CD4-positive, alpha-beta T cell (primary cell): ENCODE measurements at regions of chr17 and their contacts with region 1.

Region 1: DNA sequence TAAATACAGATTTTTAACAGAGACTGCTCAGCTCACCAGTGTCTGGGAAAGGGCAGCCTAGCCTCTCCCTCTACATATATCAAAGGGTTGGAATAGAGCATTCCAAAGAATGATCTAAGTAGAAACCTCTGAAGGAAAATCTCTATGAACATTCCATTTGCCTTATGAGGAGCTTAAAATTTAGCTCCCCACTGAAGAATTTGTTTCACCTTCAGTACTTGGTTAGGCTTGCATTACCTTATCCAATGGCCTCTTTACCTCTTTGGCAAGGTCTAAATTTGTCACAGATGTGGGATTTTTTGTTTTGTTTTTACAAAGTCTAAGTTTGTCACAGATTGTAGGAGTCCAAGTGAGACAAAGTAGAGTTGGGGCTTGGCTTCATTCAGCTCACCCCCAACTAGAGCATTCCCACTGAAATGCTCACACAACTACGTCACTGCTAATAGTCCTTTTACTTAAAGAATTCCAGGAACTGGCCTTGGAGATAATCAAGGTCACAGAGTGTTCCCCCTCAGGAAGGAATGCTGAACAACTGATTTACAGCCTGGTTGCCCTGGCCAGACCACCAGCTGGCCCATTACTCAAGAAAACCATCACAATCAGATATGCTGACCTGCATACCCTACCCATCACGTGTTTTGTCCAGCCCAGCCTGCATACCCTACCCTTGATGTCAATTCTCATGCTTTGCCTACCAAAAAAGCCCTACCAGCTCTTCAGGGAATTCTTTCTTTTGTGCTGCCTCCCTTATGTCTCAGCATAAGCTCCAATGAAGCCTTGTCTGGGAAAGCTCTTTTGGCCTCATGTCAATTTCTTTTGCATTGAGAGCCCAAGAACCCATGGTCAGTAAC is 26.6 kb upstream of the PPM1D start:
- DNase-seq: no peak
- ATAC-seq: no peak
- H3K4me3 ChIP-seq: no peak overlapping the region
- H3K4me3 Mint-ChIP-seq: no peak overlapping the region
- H3K27ac ChIP-seq: no peak overlapping the region
- H3K27ac Mint-ChIP-seq: no peak overlapping the region
- H3K4me1 ChIP-seq: peaks cover 2% of the 10 kb centered on the region
- H3K4me1 Mint-ChIP-seq: no peaks in the 10 kb centered on the region
- H3K27me3 ChIP-seq: no peaks in the 10 kb centered on the region
- H3K27me3 Mint-ChIP-seq: peaks cover 11% of the 10 kb centered on the region
- CTCF ChIP-seq: no peak

Region 2: DNA sequence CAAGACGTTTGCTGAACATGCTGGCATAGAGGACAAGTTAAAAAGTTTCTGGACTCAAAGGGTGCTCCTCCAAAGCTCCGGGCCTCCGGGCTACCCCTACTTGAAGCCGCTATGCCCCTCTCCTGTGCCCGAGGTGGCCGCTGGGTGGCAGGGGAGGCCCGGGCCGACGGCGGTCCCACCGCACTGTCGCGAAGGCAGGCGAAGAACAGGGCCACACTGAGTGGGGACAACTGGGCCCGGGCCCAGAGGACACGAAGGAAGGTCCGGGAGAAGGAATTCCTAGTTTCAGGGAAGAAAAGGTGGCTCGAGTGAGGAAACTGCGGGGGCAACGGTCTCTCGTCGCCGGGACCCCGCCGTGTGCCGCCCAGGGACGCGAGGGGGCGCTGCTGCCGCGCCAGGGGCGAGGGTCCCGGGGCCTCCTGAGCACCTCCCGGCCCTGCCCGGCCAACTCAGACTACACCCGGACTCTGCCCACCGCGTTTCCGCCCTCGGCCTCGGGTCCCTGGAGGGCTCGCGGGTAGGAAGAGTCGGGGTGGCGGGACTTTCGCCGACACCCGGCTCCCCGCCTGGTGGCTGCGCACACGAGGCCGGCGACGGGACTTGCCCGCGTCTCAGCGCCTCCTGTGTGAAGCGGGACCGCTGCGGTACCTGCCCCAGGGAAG is 152.0 kb before region 1 on chr17:
- CTCF ChIA-PET with region 1: no interaction called
- POLR2A ChIA-PET with region 1: no interaction called
- intact Hi-C with region 1: loop called in 1 of 2 experiments (anchors 2 kb)
- DNase-seq: peak; percentile 55 to 85 (median 65)
- ATAC-seq: peak; percentile 95
- H3K4me3 ChIP-seq: peak overlapping the region; percentile 52
- H3K4me3 Mint-ChIP-seq: peak overlapping the region; percentile 79
- H3K27ac ChIP-seq: no peak overlapping the region
- H3K27ac Mint-ChIP-seq: peak overlapping the region; percentile 24
- H3K4me1 ChIP-seq: peaks cover 13% of the 10 kb centered on the region
- H3K4me1 Mint-ChIP-seq: peaks cover 5% of the 10 kb centered on the region
- H3K27me3 ChIP-seq: no peaks in the 10 kb centered on the region
- H3K27me3 Mint-ChIP-seq: no peaks in the 10 kb centered on the region
- CTCF ChIP-seq: peak; percentile 100

Region 3: GRCh38 chr17:60493791-60494712 is 79.4 kb before region 1 on chr17:
- CTCF ChIA-PET with region 1: no interaction called
- POLR2A ChIA-PET with region 1: no interaction called
- intact Hi-C with region 1: no loop called
- DNase-seq: no peak
- ATAC-seq: no peak
- H3K4me3 ChIP-seq: no peak overlapping the region
- H3K4me3 Mint-ChIP-seq: no peak overlapping the region
- H3K27ac ChIP-seq: no peak overlapping the region
- H3K27ac Mint-ChIP-seq: no peak overlapping the region
- H3K4me1 ChIP-seq: no peaks in the 10 kb centered on the region
- H3K4me1 Mint-ChIP-seq: no peaks in the 10 kb centered on the region
- H3K27me3 ChIP-seq: no peaks in the 10 kb centered on the region
- H3K27me3 Mint-ChIP-seq: no peaks in the 10 kb centered on the region
- CTCF ChIP-seq: no peak

Region 4: DNA sequence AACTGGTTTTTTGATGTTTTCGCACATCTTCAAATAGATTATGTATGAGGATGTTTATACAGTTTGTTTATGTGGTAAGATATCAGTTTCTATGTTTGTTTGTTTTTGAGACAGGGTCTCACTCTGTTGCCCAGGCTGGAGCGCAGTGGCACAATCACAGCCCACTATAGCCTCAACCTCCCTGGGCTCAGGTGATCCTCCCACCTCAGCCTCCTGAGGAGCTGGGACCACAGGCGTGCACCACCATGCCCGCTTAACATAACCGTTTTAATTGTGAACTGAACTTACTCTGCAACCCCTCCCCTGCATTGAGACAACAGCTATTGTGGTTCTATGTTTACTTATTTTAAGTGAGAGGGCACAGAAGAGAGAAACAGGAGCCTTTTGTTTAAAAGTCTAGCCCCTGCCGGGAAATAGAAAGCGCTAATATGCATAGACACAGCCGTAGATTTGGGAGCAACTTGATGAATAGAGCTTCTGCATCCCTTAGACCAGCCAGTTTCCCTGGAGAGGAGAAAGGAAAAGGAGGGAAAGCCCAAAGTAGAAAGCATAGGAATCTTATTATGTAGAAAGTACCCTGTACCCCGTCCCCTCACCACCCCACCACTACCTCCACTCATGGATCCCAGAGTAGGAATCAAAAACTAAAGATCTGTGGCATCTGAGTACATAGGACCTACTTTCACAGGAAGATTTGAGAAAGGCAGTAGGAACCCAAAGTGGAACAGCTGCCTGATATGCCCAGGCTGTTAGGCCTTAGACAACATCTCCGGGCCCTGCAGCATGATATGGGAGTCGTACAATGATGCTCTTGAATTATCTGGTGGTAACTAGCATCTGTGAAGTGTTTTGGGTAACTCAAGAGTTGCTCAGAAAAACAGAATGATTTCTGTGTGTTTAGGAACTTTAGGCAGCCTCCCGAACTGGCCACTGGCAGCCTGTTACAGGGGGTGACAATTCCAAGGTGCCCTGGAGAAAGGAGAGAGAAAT is 27.7 kb before region 1 on chr17:
- CTCF ChIA-PET with region 1: no interaction called
- POLR2A ChIA-PET with region 1: no interaction called
- intact Hi-C with region 1: no loop called
- DNase-seq: no peak
- ATAC-seq: no peak
- H3K4me3 ChIP-seq: no peak overlapping the region
- H3K4me3 Mint-ChIP-seq: no peak overlapping the region
- H3K27ac ChIP-seq: no peak overlapping the region
- H3K27ac Mint-ChIP-seq: no peak overlapping the region
- H3K4me1 ChIP-seq: no peaks in the 10 kb centered on the region
- H3K4me1 Mint-ChIP-seq: no peaks in the 10 kb centered on the region
- H3K27me3 ChIP-seq: no peaks in the 10 kb centered on the region
- H3K27me3 Mint-ChIP-seq: no peaks in the 10 kb centered on the region
- CTCF ChIP-seq: no peak

Region 5: DNA sequence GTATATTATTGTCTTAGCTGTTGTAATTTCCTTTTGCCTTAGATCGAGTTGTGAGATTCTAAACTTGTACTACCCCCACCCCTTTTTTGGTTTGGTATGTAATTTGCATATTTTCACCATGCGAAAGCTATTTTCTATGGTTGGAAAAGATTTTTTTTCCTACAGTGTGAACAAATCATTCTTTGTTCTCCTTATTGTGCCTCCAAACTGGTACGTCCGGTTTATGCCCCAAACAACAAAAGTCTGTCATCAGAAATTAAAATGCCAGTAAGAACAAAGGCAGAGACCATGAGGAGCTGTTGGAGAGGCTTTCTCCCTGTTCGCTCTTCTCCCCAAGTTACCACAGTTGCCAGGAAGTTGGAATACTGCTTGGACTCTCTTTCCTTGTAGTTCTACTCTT is 170.4 kb after region 1 on chr17:
- CTCF ChIA-PET with region 1: no interaction called
- POLR2A ChIA-PET with region 1: no interaction called
- intact Hi-C with region 1: no loop called
- DNase-seq: no peak
- ATAC-seq: no peak
- H3K4me3 ChIP-seq: no peak overlapping the region
- H3K4me3 Mint-ChIP-seq: no peak overlapping the region
- H3K27ac ChIP-seq: no peak overlapping the region
- H3K27ac Mint-ChIP-seq: no peak overlapping the region
- H3K4me1 ChIP-seq: no peaks in the 10 kb centered on the region
- H3K4me1 Mint-ChIP-seq: no peaks in the 10 kb centered on the region
- H3K27me3 ChIP-seq: no peaks in the 10 kb centered on the region
- H3K27me3 Mint-ChIP-seq: no peaks in the 10 kb centered on the region
- CTCF ChIP-seq: no peak